A549 (cell line): ENCODE measurements at regions of chr10 and their contacts with region 1.

Region 1: GRCh38 chr10:13365243-13365642 is 17.1 kb upstream of the SEPHS1 start:
- DNase-seq: no peak
- ATAC-seq: no peak
- H3K4me3 ChIP-seq: no peak overlapping the region
- H3K27ac ChIP-seq: no peak overlapping the region
- H3K4me1 ChIP-seq: no peaks in the 10 kb centered on the region
- CTCF ChIP-seq: no peak
- EP300 ChIP-seq: no peak
- POLR2A ChIP-seq: no peak
- RAD21 ChIP-seq: no peak

Region 2: GRCh38 chr10:13613519-13613918 is 248.3 kb after region 1 on chr10:
- CTCF ChIA-PET with region 1: no interaction called
- POLR2A ChIA-PET with region 1: interaction called, 10 read pairs
- DNase-seq: peak; percentile 13 to 30
- ATAC-seq: peak; percentile 44 to 74; a peak in 2 of 6 replicates
- H3K4me3 ChIP-seq: no peak overlapping the region
- H3K27ac ChIP-seq: no peak overlapping the region
- H3K4me1 ChIP-seq: no peaks in the 10 kb centered on the region
- CTCF ChIP-seq: peak; percentile 56
- EP300 ChIP-seq: no peak
- POLR2A ChIP-seq: no peak
- RAD21 ChIP-seq: peak; percentile 58 to 59